ENCODE measurements at regions of chr1 and their contacts with region 1.

Region 1: GRCh38 chr1:67760030-67760821 is 73.0 kb downstream of the GNG12 start:
- DNase-seq: peak; percentile 76
- H3K4me3 Mint-ChIP-seq: no peak overlapping the region
- H3K27ac Mint-ChIP-seq: peak overlapping the region; percentile 57
- H3K4me1 Mint-ChIP-seq: peaks cover 27% of the 10 kb centered on the region
- H3K27me3 Mint-ChIP-seq: no peaks in the 10 kb centered on the region
- CTCF ChIP-seq: peak; percentile 67

Region 2: DNA sequence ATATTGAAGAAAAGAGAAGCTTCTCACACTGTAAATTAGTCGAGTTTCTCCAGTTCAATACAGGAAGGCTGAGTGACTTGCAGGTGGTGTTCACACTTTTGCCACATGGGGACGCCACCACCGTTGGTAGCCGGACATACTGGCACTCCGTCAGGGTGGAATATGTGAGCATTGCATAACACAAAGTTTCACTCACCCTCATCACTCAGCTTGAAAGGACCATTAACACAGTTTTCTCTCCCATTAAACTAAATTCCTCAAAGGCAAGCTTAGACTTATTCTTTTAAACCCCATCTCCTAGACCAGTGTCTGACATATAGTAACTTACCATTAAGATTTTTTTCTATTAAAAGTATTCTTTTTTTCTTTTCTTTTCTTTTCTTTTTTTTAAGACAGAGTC is 224.8 kb before region 1 on chr1:
- CTCF ChIA-PET with region 1: interaction called, 386 read pairs
- POLR2A ChIA-PET with region 1: interaction called, 21 read pairs
- intact Hi-C with region 1: loop called (anchors 1 kb)
- DNase-seq: peak; percentile 85
- H3K4me3 Mint-ChIP-seq: no peak overlapping the region
- H3K27ac Mint-ChIP-seq: peak overlapping the region; percentile 12
- H3K4me1 Mint-ChIP-seq: peaks cover 6% of the 10 kb centered on the region
- H3K27me3 Mint-ChIP-seq: no peaks in the 10 kb centered on the region
- CTCF ChIP-seq: peak; percentile 95

Region 3: GRCh38 chr1:67570473-67571143 is 189.6 kb before region 1 on chr1:
- CTCF ChIA-PET with region 1: interaction called, 51 read pairs
- POLR2A ChIA-PET with region 1: interaction called, 8 read pairs
- intact Hi-C with region 1: no loop called
- DNase-seq: peak; percentile 80
- H3K4me3 Mint-ChIP-seq: no peak overlapping the region
- H3K27ac Mint-ChIP-seq: peak overlapping the region; percentile 76
- H3K4me1 Mint-ChIP-seq: peaks cover 48% of the 10 kb centered on the region
- H3K27me3 Mint-ChIP-seq: no peaks in the 10 kb centered on the region
- CTCF ChIP-seq: no peak

Region 4: GRCh38 chr1:67691712-67692111 is 68.5 kb before region 1 on chr1:
- CTCF ChIA-PET with region 1: interaction called, 63 read pairs
- POLR2A ChIA-PET with region 1: interaction called, 446 read pairs
- intact Hi-C with region 1: loop called (anchors 1 kb)
- DNase-seq: no peak
- H3K4me3 Mint-ChIP-seq: no peak overlapping the region
- H3K27ac Mint-ChIP-seq: no peak overlapping the region
- H3K4me1 Mint-ChIP-seq: peaks cover 14% of the 10 kb centered on the region
- H3K27me3 Mint-ChIP-seq: no peaks in the 10 kb centered on the region
- CTCF ChIP-seq: no peak

Region 5: DNA sequence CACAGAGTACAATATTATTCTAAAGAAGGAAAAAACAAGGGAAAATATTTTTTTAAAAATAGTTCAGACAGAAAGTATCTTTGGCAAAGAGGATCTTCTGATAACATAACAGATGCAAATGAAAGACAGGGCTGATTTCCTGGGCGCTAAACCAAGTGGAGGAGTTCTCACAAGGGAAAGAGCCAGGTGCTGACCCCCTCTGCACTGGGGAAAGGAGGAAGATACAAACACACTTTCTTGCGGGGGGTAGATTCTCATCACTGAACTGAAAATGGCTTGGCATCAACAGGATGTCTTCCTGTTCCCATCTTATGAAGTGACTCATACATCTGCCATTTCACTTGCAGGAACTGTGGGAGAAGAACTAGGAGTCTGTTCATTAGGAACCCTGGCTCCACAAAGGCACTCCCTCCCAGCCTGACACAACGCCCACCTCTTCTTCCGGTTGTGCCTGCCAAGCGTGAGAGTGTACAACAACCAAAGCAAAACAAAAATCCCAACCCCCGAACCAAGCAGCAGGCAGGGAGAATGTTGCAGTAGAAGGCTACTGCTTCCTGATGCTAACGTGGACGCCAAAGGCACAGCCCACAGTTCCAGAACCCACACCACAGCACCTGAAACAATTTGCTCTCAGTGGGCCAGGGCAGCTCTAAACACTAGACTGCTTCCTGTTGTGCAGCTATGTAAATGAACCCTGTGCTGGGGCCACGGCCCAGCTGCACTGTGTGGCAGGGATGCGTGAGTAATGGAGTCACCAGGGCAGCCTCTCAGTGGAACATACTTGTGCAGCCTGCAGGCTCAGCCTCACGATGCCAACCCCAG is 24.2 kb before region 1 on chr1:
- CTCF ChIA-PET with region 1: interaction called, 12 read pairs
- POLR2A ChIA-PET with region 1: no interaction called
- intact Hi-C with region 1: no loop called
- DNase-seq: peak; percentile 98
- H3K4me3 Mint-ChIP-seq: peak overlapping the region; percentile 64
- H3K27ac Mint-ChIP-seq: peak overlapping the region; percentile 96
- H3K4me1 Mint-ChIP-seq: peaks cover 34% of the 10 kb centered on the region
- H3K27me3 Mint-ChIP-seq: no peaks in the 10 kb centered on the region
- CTCF ChIP-seq: no peak

Region 6: DNA sequence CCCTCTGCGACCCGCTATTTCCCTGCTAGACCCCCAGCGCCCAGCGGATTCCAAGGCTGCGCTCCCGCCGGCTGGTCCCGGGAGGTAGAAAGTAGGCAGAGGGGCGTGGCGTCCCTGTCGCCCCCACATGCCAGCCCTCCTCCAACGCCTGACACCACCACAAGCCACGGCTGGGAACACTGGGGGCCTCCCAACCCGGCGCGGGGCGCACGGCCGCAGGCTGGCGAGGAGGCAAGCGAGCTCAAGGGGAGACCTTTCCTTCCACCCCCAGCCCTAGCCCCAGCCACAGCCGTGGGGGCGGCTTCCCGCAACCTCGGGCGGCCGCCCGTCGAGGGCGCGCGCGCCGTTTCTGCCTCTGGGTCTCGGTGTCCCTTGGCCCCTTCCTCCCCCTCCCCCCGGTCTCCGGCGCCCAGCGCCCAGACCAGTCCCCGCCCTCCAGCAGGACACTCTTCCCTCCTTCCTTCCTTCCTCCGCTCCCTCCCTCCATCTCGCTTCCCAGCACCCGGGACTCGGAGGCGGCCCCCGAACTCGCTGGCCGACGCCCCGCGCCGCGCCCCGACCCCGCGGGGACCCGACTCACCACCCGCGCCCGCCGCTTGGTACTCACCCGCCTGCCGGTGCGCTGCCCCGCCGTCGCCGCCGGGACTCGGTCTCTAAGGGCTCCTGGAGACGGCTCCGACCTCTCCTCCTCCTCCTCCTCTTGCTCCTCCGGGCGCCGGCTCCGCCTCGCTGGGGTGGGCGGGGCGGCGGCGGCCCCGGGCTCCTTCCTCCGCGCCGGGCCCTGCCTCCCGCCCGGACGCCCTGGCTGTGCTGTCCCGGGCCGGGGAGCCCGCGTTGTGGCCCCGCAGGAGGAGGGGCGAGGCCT is 72.7 kb after region 1 on chr1 and contains the start of gene GNG12:
- CTCF ChIA-PET with region 1: interaction called, 174 read pairs
- POLR2A ChIA-PET with region 1: interaction called, 56 read pairs
- intact Hi-C with region 1: no loop called
- DNase-seq: peak; percentile 83
- H3K4me3 Mint-ChIP-seq: peak within 1 kb of the TSS; percentile 92
- H3K27ac Mint-ChIP-seq: peak within 1 kb of the TSS; percentile 99
- H3K4me1 Mint-ChIP-seq: peaks cover 28% of the 10 kb centered on the region
- H3K27me3 Mint-ChIP-seq: no peaks in the 10 kb centered on the region
- CTCF ChIP-seq: no peak
- total RNA-seq, gene GNG12: 117 and 135 TPM in 2 replicates